ENCODE measurements at regions of chr17 and their contacts with region 1.

Region 1: GRCh38 chr17:42388381-42389134 is at the start of gene STAT3:
- DNase-seq: peak; percentile 100
- ATAC-seq: peak; percentile 89
- H3K4me3 Mint-ChIP-seq: peak within 1 kb of the TSS; percentile 97
- H3K27ac Mint-ChIP-seq: peak within 1 kb of the TSS; percentile 100
- H3K4me1 Mint-ChIP-seq: peaks cover 55% of the 10 kb centered on the region
- H3K27me3 Mint-ChIP-seq: no peaks in the 10 kb centered on the region
- CTCF ChIP-seq: no peak
- total RNA-seq, gene STAT3: 276 to 286 TPM

Region 2: GRCh38 chr17:42287926-42288802 is 100.4 kb before region 1 on chr17 and contains the start of gene STAT5A:
- CTCF ChIA-PET with region 1: interaction called, 3 read pairs
- POLR2A ChIA-PET with region 1: interaction called, 13 read pairs
- intact Hi-C with region 1: no loop called
- DNase-seq: peak; percentile 90
- ATAC-seq: peak; percentile 76
- H3K4me3 Mint-ChIP-seq: peak within 1 kb of the TSS; percentile 84
- H3K27ac Mint-ChIP-seq: peak within 1 kb of the TSS; percentile 94
- H3K4me1 Mint-ChIP-seq: peaks cover 54% of the 10 kb centered on the region
- H3K27me3 Mint-ChIP-seq: no peaks in the 10 kb centered on the region
- CTCF ChIP-seq: no peak
- total RNA-seq, gene STAT5A: 163 to 190 TPM

Region 3: DNA sequence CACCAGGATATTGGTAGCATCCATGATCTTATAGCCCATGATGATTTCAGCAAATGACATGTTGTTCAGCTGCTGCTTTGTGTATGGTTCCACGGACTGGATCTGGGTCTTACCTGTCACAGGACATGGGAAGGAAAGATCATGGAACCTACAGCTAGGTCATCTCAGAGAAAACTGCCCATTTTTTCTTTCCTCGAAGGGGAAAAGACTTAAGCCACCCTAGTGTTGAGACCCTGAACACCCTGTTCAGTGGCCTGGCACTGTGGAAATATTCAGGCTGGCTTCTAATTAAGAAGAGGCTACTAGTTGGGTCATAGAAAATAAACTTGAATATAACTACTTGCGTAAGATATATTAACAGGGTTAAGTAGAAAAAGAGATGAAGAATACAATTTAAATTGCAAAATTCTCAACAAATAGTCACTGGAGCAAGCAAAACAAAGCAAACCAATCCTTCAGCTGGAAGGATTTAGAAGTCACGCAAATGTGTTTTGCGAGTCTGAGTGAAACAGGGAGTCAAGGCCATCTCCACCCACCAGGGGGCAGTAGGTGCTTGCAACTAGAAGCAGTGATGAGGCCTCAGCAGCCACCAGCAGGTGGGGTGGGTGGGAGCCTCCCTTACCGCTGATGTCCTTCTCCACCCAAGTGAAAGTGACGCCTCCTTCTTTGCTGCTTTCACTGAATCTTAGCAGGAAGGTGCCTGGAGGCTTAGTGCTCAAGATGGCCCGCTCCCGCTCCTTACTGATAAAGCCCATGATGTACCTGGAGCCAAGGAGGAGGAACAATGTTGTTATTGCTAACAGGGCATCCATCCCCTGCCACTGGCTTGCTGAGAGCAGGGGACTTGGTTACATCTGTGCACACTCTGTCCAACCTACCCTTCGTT is 65.9 kb before region 1 on chr17:
- CTCF ChIA-PET with region 1: interaction called, 968 read pairs
- POLR2A ChIA-PET with region 1: interaction called, 12 read pairs
- intact Hi-C with region 1: loop called (anchors 5 kb)
- DNase-seq: peak; percentile 99
- ATAC-seq: peak; percentile 89
- H3K4me3 Mint-ChIP-seq: no peak overlapping the region
- H3K27ac Mint-ChIP-seq: peak overlapping the region; percentile 85
- H3K4me1 Mint-ChIP-seq: peaks cover 52% of the 10 kb centered on the region
- H3K27me3 Mint-ChIP-seq: no peaks in the 10 kb centered on the region
- CTCF ChIP-seq: peak; percentile 100

Region 4: DNA sequence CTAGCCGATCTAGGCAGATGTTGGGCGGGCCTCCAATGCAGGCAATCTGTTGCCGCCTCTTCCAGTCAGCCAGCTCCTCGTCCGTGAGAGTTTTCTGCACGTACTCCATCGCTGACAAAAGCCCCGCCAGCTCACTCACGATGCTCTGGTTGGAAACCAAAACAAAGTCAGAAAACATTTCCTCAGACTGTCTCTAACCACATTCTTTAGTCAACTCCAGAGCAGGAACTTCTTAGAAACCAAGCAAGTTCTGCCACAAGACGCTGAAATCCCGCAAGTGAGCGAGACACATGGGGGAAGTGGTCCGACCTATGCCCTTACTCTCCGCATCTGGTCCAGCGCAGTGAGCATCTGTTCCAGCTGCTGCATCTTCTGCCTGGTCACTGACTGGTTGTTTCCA is 51.1 kb before region 1 on chr17:
- CTCF ChIA-PET with region 1: interaction called, 968 read pairs
- POLR2A ChIA-PET with region 1: interaction called, 24 read pairs
- intact Hi-C with region 1: loop called (anchors 5 kb)
- DNase-seq: peak; percentile 92
- ATAC-seq: peak; percentile 62
- H3K4me3 Mint-ChIP-seq: peak overlapping the region; percentile 56
- H3K27ac Mint-ChIP-seq: peak overlapping the region; percentile 89
- H3K4me1 Mint-ChIP-seq: peaks cover 77% of the 10 kb centered on the region
- H3K27me3 Mint-ChIP-seq: no peaks in the 10 kb centered on the region
- CTCF ChIP-seq: no peak

Region 5: DNA sequence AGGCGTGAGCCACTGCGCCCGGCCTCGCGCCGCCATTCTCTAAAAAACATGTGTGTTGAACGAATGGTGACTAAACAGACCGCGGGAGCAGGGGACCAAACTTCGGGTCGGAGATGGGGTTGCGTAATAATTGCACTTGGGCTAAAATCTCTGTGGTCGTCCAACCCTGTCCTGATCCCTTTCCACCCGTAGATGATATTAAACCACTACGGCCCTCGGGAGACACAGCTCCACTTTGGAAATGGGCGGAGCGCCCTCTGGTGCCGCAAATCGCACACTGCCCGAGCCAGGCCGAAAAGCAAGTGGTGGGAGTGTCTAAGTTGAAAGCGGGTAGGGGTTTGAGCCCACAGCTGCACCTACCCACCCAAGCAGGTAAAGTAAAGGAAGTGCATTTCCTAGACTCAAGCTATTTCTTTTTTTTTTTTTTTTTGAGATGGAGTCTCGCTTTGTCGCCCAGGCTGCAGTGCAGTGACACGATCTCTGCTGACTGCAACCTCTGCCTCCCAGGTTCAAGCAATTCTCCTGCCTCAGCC is 17.5 kb after region 1 on chr17:
- CTCF ChIA-PET with region 1: interaction called, 140 read pairs
- POLR2A ChIA-PET with region 1: interaction called, 9 read pairs
- intact Hi-C with region 1: no loop called
- DNase-seq: peak; percentile 89
- ATAC-seq: peak; percentile 77
- H3K4me3 Mint-ChIP-seq: no peak overlapping the region
- H3K27ac Mint-ChIP-seq: no peak overlapping the region
- H3K4me1 Mint-ChIP-seq: peaks cover 24% of the 10 kb centered on the region
- H3K27me3 Mint-ChIP-seq: no peaks in the 10 kb centered on the region
- CTCF ChIP-seq: peak; percentile 94

Region 6: GRCh38 chr17:42618442-42619150 is 230.0 kb after region 1 on chr17:
- CTCF ChIA-PET with region 1: no interaction called
- POLR2A ChIA-PET with region 1: no interaction called
- intact Hi-C with region 1: no loop called
- DNase-seq: no peak
- ATAC-seq: no peak
- H3K4me3 Mint-ChIP-seq: no peak overlapping the region
- H3K27ac Mint-ChIP-seq: no peak overlapping the region
- H3K4me1 Mint-ChIP-seq: peaks cover 9% of the 10 kb centered on the region
- H3K27me3 Mint-ChIP-seq: no peaks in the 10 kb centered on the region
- CTCF ChIP-seq: no peak